ENCODE measurements at regions of chr9 and their contacts with region 1.

Region 1: DNA sequence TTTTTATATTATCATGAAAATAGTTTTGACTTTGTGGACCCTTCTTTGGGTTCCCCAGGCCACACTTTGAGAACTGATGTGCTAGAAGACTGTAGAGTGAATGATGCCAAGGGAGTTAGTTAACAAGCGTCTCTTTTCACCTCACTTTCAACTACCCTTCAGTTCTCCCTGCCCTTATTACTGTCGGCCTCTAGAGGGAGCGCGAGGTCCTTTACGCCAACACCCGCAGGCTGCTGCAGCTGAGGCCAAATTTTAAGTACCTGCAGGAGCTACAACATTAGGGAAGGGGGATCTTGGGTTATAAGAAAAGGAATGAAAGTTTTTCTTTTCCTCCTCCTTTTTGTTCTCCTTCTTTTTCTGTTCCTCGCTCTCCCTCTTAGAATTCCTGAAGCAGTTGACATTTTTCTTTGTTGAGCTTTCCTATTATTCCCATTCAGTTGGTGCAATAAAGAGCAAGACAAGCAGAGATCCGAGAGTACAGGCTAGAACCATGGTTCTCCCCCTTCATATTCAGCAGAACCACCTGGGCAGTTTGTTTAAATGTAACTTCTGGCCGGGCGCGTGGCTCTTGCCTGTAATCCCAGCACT is 84.0 kb downstream of the ZFAND5 start:
- DNase-seq: peak; percentile 56 to 80
- H3K4me3 ChIP-seq: no peak overlapping the region
- H3K27ac ChIP-seq: no peak overlapping the region
- H3K4me1 ChIP-seq: no peaks in the 10 kb centered on the region
- H3K27me3 ChIP-seq: no peaks in the 10 kb centered on the region
- CTCF ChIP-seq: peak; percentile 87 to 92

Region 2: DNA sequence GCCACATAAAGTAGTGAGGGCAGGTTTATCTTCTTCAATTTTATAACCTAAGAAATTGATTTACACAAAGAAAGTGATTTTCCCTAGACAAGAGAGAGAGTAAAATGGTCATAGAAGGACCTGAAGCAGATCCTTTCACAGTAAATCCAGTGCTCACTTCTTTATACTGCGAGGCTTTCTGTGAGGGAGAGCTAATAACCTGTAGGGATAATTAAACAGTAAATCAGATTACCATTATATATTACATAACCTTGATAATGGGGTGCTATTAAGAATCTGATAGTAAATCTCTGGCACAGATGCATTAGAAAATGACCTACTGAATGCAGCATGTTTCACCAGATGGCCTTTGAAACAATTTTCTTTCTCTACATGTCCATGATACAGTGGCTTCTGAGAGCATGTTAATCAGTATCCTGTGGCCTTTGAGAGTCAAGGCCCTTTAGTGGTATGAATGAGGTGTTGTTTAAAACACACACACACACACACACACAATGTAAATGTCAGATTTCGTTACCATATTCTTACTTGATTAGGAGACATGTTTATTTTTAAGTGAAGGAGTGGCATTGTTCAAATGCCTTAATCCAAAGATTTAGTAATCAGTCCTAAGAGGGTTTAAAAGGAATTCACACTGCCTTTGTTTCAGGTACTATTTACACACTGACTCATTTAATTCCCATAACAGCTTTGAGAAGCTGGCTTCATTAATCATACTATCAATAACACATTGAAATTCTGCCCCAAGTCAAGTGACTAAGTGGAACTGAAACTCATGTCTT is 547.1 kb after region 1 on chr9:
- intact Hi-C with region 1: loop called (anchors 5 kb)
- DNase-seq: no peak
- H3K4me3 ChIP-seq: no peak overlapping the region
- H3K27ac ChIP-seq: peak overlapping the region in 1 of 2 donors; percentile 65
- H3K4me1 ChIP-seq: peaks cover 0 to 17% (median 4%) of the 10 kb centered on the region in 4 donors
- H3K27me3 ChIP-seq: no peaks in the 10 kb centered on the region
- CTCF ChIP-seq: no peak

Measured in tibial artery (tissue), 4 donors.